Natural killer cell (primary cell): ENCODE measurements at regions of chr22 and their contacts with region 1.

Region 1: DNA sequence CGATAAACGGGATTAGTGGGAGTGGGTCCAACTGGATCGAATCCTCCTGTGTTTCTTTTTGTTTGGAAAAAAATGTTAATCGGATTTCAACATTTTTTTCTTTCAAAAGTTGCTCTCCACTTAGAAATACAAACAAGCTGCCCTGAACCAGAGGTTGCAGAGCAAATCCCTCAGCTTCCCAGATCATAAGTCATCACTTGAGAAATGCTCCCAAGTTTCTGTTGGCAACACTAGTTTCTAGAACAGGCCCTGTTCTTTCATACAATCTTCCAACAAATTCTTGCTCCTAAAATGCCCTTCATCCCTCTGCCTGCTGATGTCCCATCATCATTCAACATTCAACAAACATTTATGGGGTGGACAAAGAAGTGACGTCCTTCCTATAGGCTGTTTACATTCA is 1.3 kb upstream of the MLC1 start:
- DNase-seq: no peak
- ATAC-seq: no peak
- H3K4me3 ChIP-seq: no peak overlapping the region
- H3K4me3 Mint-ChIP-seq: no peak overlapping the region
- H3K27ac ChIP-seq: no peak overlapping the region
- H3K27ac Mint-ChIP-seq: no peak overlapping the region
- H3K4me1 ChIP-seq: peaks cover 20% of the 10 kb centered on the region
- H3K4me1 Mint-ChIP-seq: peaks cover 9 to 29% of the 10 kb centered on the region in 2 donors
- H3K27me3 ChIP-seq: no peaks in the 10 kb centered on the region
- H3K27me3 Mint-ChIP-seq: no peaks in the 10 kb centered on the region
- CTCF ChIP-seq: no peak

Region 2: GRCh38 chr22:50058906-50059880 is 27.3 kb before region 1 on chr22:
- intact Hi-C with region 1: no loop called
- DNase-seq: no peak
- ATAC-seq: peak in 1 of 3 donors; percentile 25
- H3K4me3 ChIP-seq: no peak overlapping the region
- H3K4me3 Mint-ChIP-seq: peak overlapping the region; percentile 55
- H3K27ac ChIP-seq: no peak overlapping the region
- H3K27ac Mint-ChIP-seq: no peak overlapping the region
- H3K4me1 ChIP-seq: peaks cover 9% of the 10 kb centered on the region
- H3K4me1 Mint-ChIP-seq: no peaks in the 10 kb centered on the region
- H3K27me3 ChIP-seq: peaks cover 3% of the 10 kb centered on the region
- H3K27me3 Mint-ChIP-seq: peaks cover 0 to 3% of the 10 kb centered on the region in 2 donors
- CTCF ChIP-seq: no peak

Region 3: GRCh38 chr22:50102946-50103345 is 16.4 kb after region 1 on chr22:
- intact Hi-C with region 1: loop called (anchors 1 kb)
- DNase-seq: no peak
- ATAC-seq: peak; percentile 24 to 57 (median 44)
- H3K4me3 ChIP-seq: no peak overlapping the region
- H3K4me3 Mint-ChIP-seq: peak overlapping the region; percentile 40
- H3K27ac ChIP-seq: no peak overlapping the region
- H3K27ac Mint-ChIP-seq: peak overlapping the region; percentile 66 to 80
- H3K4me1 ChIP-seq: peaks cover 24% of the 10 kb centered on the region
- H3K4me1 Mint-ChIP-seq: peaks cover 30 to 38% of the 10 kb centered on the region in 2 donors
- H3K27me3 ChIP-seq: no peaks in the 10 kb centered on the region
- H3K27me3 Mint-ChIP-seq: peaks cover 0 to 2% of the 10 kb centered on the region in 2 donors
- CTCF ChIP-seq: no peak